ENCODE measurements at regions of chrX and their contacts with region 1.

Region 1: DNA sequence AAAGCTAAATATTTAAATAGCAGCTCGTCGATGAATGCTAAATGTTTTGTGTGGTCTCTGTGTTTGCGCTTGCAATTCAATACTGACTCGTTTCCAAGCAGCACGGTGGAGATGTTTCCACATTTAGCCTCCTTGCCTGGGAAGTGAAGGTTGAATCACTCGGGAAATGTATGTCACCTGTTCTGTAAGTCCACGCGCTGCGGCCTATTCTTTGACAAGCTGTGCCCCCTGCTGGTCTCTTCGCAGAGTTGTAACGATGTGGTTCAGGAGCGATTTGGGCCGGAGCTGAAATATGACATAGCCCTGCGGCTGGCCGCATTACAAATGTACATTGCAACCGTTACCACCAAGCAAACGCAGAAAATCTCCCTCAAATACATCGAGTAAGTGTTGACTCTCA is 89.6 kb upstream of the PRPS2 start:
- DNase-seq: peak; percentile 52 to 56
- H3K4me3 ChIP-seq: no peak overlapping the region
- H3K4me3 Mint-ChIP-seq: no peak overlapping the region
- H3K27ac Mint-ChIP-seq: no peak overlapping the region
- H3K4me1 ChIP-seq: no peaks in the 10 kb centered on the region
- H3K4me1 Mint-ChIP-seq: no peaks in the 10 kb centered on the region
- H3K27me3 ChIP-seq: no peaks in the 10 kb centered on the region
- H3K27me3 Mint-ChIP-seq: peaks cover 10% of the 10 kb centered on the region
- CTCF ChIP-seq: peak; percentile 52 to 64

Region 2: DNA sequence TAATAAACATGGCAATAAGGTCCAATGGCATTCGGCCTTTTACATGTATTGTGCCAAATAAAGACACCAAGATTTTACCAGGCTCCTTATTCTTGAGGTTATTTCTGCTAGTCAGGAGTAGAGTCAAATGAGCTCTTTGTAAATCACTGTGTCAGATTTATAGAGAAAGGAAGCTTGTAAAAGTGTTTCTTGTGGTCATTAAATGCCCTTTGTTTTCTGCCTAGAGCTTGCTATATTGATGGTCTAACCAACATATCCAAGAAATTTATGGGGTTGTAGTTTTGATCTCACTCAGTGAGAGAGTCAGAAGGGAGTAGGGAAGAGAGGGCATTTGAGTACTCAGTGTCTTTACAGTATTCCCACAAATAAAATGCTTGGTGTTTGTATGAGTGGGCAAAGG is 649.5 kb before region 1 on chrX:
- CTCF ChIA-PET with region 1: no interaction called
- POLR2A ChIA-PET with region 1: no interaction called
- intact Hi-C with region 1: no loop called
- DNase-seq: no peak
- H3K4me3 ChIP-seq: no peak overlapping the region
- H3K4me3 Mint-ChIP-seq: no peak overlapping the region
- H3K27ac Mint-ChIP-seq: no peak overlapping the region
- H3K4me1 ChIP-seq: no peaks in the 10 kb centered on the region
- H3K4me1 Mint-ChIP-seq: no peaks in the 10 kb centered on the region
- H3K27me3 ChIP-seq: no peaks in the 10 kb centered on the region
- H3K27me3 Mint-ChIP-seq: peaks cover 10% of the 10 kb centered on the region
- CTCF ChIP-seq: no peak

Region 3: DNA sequence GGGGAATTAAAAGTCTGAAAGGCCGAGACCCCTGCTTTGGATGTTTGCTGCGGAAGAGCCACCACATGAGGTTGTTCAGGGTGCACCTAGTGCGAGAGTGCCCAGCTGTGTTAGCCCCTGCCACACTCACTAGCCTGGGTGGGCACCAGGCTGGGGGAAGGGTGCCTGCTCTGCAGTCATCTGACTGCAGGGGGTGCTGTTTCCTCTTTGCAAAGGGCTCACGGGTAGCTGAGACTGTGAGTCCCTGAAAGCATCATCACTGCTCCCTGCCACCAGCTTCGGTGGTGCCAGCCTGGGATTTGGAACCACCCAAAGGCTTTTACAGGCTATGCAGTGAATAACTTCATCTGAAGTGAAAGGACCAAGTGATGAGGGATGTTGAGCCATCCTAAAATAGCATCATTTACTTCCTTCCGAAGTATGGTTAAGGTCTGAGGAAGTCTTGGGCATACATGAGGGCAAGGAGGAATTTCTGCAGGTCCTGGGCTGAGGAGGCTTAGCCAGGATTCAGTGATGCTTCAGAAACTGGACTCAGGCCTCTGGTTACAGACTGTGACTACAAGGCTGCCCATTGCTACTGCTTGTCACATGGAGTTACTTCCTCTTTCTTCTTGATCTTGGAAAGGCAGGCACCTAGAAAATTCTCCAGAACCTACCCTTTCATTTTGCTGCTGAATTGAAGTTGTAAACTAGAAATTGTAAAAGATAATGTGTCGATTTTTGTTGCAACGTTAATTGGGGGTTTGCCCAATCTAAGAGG is 203.6 kb before region 1 on chrX:
- CTCF ChIA-PET with region 1: no interaction called
- POLR2A ChIA-PET with region 1: no interaction called
- intact Hi-C with region 1: loop called (anchors 5 kb)
- DNase-seq: no peak
- H3K4me3 ChIP-seq: no peak overlapping the region
- H3K4me3 Mint-ChIP-seq: no peak overlapping the region
- H3K27ac Mint-ChIP-seq: no peak overlapping the region
- H3K4me1 ChIP-seq: no peaks in the 10 kb centered on the region
- H3K4me1 Mint-ChIP-seq: no peaks in the 10 kb centered on the region
- H3K27me3 ChIP-seq: no peaks in the 10 kb centered on the region
- H3K27me3 Mint-ChIP-seq: peaks cover 3% of the 10 kb centered on the region
- CTCF ChIP-seq: peak in 1 of 2 experiments; percentile 30

Region 4: GRCh38 chrX:12771445-12772069 is 69.9 kb after region 1 on chrX:
- CTCF ChIA-PET with region 1: no interaction called
- POLR2A ChIA-PET with region 1: no interaction called
- intact Hi-C with region 1: loop called (anchors 1 kb)
- DNase-seq: peak; percentile 39 to 62
- H3K4me3 ChIP-seq: no peak overlapping the region
- H3K4me3 Mint-ChIP-seq: no peak overlapping the region
- H3K27ac Mint-ChIP-seq: no peak overlapping the region
- H3K4me1 ChIP-seq: no peaks in the 10 kb centered on the region
- H3K4me1 Mint-ChIP-seq: no peaks in the 10 kb centered on the region
- H3K27me3 ChIP-seq: no peaks in the 10 kb centered on the region
- H3K27me3 Mint-ChIP-seq: peaks cover 4% of the 10 kb centered on the region
- CTCF ChIP-seq: peak; percentile 80 to 91

Region 5: DNA sequence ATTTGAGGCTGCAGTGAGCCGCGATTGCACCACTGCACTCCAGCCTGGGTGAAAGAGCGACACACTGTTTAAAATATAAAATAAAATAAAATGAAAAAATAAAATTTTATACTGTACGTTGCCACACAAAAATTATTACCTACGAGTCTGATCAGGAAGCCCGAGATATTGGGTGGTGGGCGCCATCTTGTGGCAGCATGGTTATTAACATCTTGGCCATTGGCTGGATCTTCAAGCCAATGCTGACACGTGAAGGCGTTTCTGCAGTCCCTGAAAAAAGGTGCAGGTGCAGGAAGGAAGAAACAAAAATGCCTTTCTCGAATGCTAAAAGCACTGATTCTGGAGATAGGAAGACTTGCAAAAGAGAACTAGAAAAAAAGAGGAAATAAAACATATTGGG is 199.9 kb after region 1 on chrX:
- CTCF ChIA-PET with region 1: no interaction called
- POLR2A ChIA-PET with region 1: no interaction called
- intact Hi-C with region 1: loop called (anchors 5 kb)
- DNase-seq: peak; percentile 46 to 70
- H3K4me3 ChIP-seq: no peak overlapping the region
- H3K4me3 Mint-ChIP-seq: no peak overlapping the region
- H3K27ac Mint-ChIP-seq: no peak overlapping the region
- H3K4me1 ChIP-seq: no peaks in the 10 kb centered on the region
- H3K4me1 Mint-ChIP-seq: no peaks in the 10 kb centered on the region
- H3K27me3 ChIP-seq: no peaks in the 10 kb centered on the region
- H3K27me3 Mint-ChIP-seq: no peaks in the 10 kb centered on the region
- CTCF ChIP-seq: peak; percentile 50 to 58